HepG2 (cell line): ENCODE measurements at regions of chr12 and their contacts with region 1.

Region 1: DNA sequence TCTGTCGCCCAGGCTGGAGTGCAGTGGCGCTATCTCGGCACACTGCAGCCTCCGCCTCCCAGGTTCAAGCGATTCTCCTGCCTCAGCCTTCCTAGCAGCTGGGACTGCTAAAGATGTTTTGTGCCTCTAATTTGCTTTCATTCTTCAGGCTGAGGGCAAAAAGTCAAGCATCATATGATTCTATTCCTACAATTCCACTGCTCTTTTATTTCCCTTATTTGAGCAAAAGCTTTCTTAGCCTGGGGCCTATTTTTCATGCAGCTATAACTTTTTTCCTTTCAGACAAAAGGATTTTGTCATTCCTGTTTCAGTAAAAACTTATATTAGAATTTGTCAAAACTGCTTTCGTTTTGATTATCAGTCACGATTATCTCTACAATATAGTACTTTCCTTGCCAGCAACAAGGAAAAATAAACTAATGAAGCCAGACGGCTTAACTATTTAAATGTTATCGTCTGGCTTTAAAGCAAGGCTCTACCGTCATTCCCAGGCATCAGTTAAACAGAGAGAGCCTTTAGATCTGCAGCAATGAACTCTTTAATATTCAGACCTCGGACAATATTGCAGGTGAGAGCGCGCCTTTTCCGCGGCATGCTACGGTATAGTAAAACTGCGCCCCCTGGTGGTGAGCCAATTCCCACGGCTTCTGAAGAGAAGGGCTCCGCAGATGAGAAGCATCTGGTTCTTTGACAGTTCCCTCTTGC is 1.4 kb upstream of the SLC2A13 start:
- DNase-seq: peak; percentile 63
- ATAC-seq: peak; percentile 26
- H3K4me3 ChIP-seq: peak overlapping the region in 2 of 3 experiments; percentile 14 to 78; a peak in 1 of 6 replicates
- H3K27ac ChIP-seq: no peak overlapping the region
- H3K4me1 ChIP-seq: peaks cover 45% of the 10 kb centered on the region
- H3K27me3 ChIP-seq: no peaks in the 10 kb centered on the region; a peak in 3 of 5 replicates
- CTCF ChIP-seq: peak; percentile 86
- EP300 ChIP-seq: no peak
- POLR2A ChIP-seq: no peak
- RAD21 ChIP-seq: peak; percentile 65

Region 2: DNA sequence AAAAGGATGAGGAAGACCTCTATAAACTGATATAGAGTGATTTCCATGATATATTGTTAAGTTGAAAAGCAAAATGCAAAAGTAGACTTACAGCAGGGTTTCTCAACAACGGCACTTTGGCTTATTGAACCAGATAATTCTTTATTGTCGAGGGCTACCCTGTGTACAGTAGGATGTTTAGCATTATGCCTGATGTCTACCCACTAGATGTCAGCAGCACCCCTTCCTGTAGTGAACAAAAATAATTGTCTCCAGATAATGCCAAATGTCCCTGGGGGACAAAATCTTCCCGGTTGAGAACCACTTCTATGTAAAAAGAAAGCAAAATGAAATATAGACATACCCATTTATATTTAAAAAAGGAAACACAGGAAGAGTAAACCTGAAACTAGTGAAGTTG is 520.0 kb before region 1 on chr12:
- CTCF ChIA-PET with region 1: no interaction called
- POLR2A ChIA-PET with region 1: no interaction called
- in situ Hi-C with region 1: loop called (anchors 25 kb)
- intact Hi-C with region 1: no loop called
- DNase-seq: no peak
- ATAC-seq: peak; percentile 71; the same call in 2 of the 3 replicates
- H3K4me3 ChIP-seq: no peak overlapping the region
- H3K27ac ChIP-seq: no peak overlapping the region
- H3K4me1 ChIP-seq: peaks cover 5% of the 10 kb centered on the region
- H3K27me3 ChIP-seq: no peaks in the 10 kb centered on the region
- CTCF ChIP-seq: peak; percentile 49
- EP300 ChIP-seq: no peak
- POLR2A ChIP-seq: no peak
- RAD21 ChIP-seq: no peak

Region 3: GRCh38 chr12:39764944-39765560 is 342.2 kb before region 1 on chr12:
- CTCF ChIA-PET with region 1: interaction called, 7 read pairs
- POLR2A ChIA-PET with region 1: no interaction called
- in situ Hi-C with region 1: loop called (anchors 10 kb)
- intact Hi-C with region 1: loop called (anchors 1 kb)
- DNase-seq: peak; percentile 12
- ATAC-seq: peak; percentile 67
- H3K4me3 ChIP-seq: no peak overlapping the region
- H3K27ac ChIP-seq: no peak overlapping the region
- H3K4me1 ChIP-seq: no peaks in the 10 kb centered on the region
- H3K27me3 ChIP-seq: no peaks in the 10 kb centered on the region
- CTCF ChIP-seq: peak; percentile 67
- EP300 ChIP-seq: no peak
- POLR2A ChIP-seq: no peak
- RAD21 ChIP-seq: peak; percentile 54; the same call in 1 of the 2 replicates

Region 4: DNA sequence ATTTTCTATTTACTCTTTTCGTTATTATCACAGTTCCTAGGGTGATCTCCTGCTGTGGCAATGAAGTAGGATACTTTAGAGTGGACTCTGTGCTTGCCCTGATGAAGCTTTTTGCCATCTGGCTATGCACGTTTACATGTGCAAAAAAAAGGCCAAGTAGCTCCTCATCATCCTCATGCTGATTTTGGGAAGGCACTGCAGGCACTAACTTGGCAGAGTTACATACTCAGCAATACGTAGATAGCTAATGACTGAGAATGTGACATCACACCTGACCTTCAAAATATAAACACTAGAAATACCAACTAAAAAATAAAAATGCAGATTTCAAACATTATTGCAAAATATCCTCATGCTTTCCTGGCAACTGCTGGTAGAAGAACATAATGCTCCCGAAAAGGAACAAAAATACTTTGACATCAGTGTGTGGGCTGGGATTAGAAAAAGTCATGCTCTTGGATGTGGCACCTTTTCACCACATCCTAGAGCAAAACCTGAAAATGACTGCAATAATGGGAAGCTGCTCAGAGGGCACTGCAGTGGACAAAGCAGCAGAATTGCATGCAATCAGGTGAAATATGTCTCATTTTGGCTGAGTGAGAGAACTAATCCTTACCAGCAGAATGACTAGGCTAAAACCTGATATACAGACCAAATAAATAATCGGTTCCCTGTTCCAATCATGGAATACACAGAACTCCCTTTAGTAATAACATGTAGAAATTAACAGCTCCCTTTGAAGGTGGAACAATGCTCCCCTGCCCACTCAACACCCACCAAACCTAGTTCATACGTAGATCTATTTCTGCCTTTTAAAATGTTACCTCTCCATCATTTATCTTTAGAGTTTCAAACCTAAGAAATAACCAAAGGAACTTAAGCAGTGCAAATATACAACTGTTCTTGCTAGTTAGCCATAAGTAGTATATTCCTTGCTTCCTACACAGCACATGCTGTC is 334.3 kb before region 1 on chr12:
- CTCF ChIA-PET with region 1: no interaction called
- POLR2A ChIA-PET with region 1: no interaction called
- in situ Hi-C with region 1: loop called (anchors 10 kb)
- intact Hi-C with region 1: no loop called
- DNase-seq: no peak
- ATAC-seq: no peak
- H3K4me3 ChIP-seq: no peak overlapping the region
- H3K27ac ChIP-seq: no peak overlapping the region
- H3K4me1 ChIP-seq: no peaks in the 10 kb centered on the region
- H3K27me3 ChIP-seq: no peaks in the 10 kb centered on the region
- CTCF ChIP-seq: no peak
- EP300 ChIP-seq: no peak
- POLR2A ChIP-seq: no peak
- RAD21 ChIP-seq: no peak

Region 5: GRCh38 chr12:39807043-39807442 is 300.2 kb before region 1 on chr12:
- CTCF ChIA-PET with region 1: no interaction called
- POLR2A ChIA-PET with region 1: no interaction called
- in situ Hi-C with region 1: no loop called
- intact Hi-C with region 1: loop called (anchors 2 kb)
- DNase-seq: peak; percentile 45
- ATAC-seq: peak; percentile 99
- H3K4me3 ChIP-seq: no peak overlapping the region
- H3K27ac ChIP-seq: no peak overlapping the region
- H3K4me1 ChIP-seq: no peaks in the 10 kb centered on the region
- H3K27me3 ChIP-seq: no peaks in the 10 kb centered on the region
- CTCF ChIP-seq: peak; percentile 54
- EP300 ChIP-seq: no peak
- POLR2A ChIP-seq: no peak
- RAD21 ChIP-seq: no peak

Region 6: DNA sequence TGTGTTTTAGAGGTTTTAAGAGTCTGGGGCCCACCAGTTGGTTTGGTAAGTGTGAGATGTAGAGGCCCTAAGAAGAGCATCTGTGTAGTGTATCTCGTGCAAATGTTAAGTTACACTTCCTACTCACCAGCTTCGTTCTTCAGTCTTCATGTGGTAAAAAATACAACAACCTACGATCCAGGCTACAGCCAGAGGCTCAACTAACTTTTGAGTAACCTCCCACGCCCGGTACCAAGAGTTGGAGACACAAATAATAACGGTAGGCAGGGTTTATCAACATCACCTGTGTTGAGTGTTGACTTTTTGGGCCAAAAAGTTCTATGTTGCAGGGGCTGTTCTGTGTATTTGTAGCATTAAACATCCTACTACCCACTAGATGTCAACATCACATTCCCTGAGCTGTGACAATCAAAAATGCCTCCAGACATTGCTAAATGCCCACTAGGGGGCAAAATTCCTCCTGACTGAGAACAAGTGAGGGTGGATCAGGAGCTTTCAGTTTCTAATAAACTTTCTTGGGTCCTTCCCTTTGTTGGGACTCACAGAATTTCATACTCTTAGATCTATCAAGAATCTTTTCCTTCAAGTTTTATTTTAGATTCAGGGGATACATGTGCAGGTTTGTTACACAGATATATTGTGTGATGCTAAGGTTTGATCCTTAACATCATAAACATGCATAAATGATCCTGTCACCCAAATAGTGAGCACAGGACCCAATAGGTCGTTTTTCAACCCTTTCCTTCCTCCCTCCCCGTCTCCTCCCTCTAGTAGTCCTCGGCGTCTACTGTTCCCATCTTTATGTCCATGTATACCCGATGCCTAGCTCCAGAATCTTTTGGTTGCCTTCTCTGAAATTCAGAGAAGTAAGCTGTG is 96.1 kb before region 1 on chr12:
- CTCF ChIA-PET with region 1: interaction called, 26 read pairs
- POLR2A ChIA-PET with region 1: interaction called, 5 read pairs
- in situ Hi-C with region 1: loop called (anchors 5 kb)
- intact Hi-C with region 1: loop called (anchors 1 kb)
- DNase-seq: peak; percentile 65
- ATAC-seq: peak; percentile 97
- H3K4me3 ChIP-seq: no peak overlapping the region
- H3K27ac ChIP-seq: no peak overlapping the region
- H3K4me1 ChIP-seq: no peaks in the 10 kb centered on the region
- H3K27me3 ChIP-seq: no peaks in the 10 kb centered on the region
- CTCF ChIP-seq: peak; percentile 63
- EP300 ChIP-seq: no peak
- POLR2A ChIP-seq: no peak
- RAD21 ChIP-seq: no peak

Region 7: GRCh38 chr12:40054554-40055227 is 52.6 kb before region 1 on chr12:
- CTCF ChIA-PET with region 1: no interaction called
- POLR2A ChIA-PET with region 1: no interaction called
- in situ Hi-C with region 1: no loop called
- intact Hi-C with region 1: loop called (anchors 5 kb)
- DNase-seq: no peak
- ATAC-seq: no peak
- H3K4me3 ChIP-seq: no peak overlapping the region
- H3K27ac ChIP-seq: no peak overlapping the region
- H3K4me1 ChIP-seq: no peaks in the 10 kb centered on the region
- H3K27me3 ChIP-seq: no peaks in the 10 kb centered on the region
- CTCF ChIP-seq: no peak
- EP300 ChIP-seq: no peak
- POLR2A ChIP-seq: no peak
- RAD21 ChIP-seq: no peak

Region 8: GRCh38 chr12:40192704-40193255 is 85.5 kb after region 1 on chr12:
- CTCF ChIA-PET with region 1: no interaction called
- POLR2A ChIA-PET with region 1: no interaction called
- in situ Hi-C with region 1: no loop called
- intact Hi-C with region 1: no loop called
- DNase-seq: no peak
- ATAC-seq: no peak
- H3K4me3 ChIP-seq: no peak overlapping the region
- H3K27ac ChIP-seq: no peak overlapping the region
- H3K4me1 ChIP-seq: no peaks in the 10 kb centered on the region
- H3K27me3 ChIP-seq: no peaks in the 10 kb centered on the region
- CTCF ChIP-seq: no peak
- EP300 ChIP-seq: no peak
- POLR2A ChIP-seq: no peak
- RAD21 ChIP-seq: no peak